CD4-positive, alpha-beta memory T cell (primary cell): ENCODE measurements at regions of chr20 and their contacts with region 1.

Region 1: DNA sequence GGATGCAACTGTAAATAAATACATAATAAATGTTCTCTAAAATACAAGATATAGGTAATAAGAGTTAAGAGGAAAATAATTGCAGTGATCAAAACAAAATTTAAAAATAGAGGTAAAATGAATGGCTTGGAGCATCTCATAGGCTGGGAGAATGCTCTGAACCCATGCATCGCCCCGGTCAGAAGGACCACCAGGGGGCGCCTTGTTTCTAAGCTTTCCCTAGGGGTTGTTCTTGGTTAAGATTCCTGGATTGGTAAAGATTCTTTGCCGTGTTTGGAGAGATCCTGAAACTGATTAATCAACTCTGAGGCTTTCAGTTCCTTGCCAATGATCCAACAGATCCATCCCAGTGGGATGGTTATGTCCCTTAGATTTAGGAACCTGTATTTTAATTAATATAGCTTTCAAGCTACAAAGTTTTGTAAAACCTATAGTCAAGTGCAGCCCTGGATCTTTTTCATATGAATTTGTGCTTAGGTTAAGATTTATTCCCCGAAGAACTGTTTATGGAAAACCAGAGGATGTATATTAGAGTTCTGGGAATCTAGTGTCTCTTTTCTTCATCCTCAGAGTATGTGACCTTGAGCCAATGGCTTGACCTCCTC is 45.3 kb upstream of the PRELID3B start:
- DNase-seq: peak; percentile 75 to 81 (median 79)
- H3K4me3 ChIP-seq: no peak overlapping the region
- H3K4me3 Mint-ChIP-seq: no peak overlapping the region
- H3K27ac ChIP-seq: no peak overlapping the region
- H3K27ac Mint-ChIP-seq: peak overlapping the region in 3 of 7 donors; percentile 46 to 85 (median 65)
- H3K4me1 ChIP-seq: peaks cover 4% of the 10 kb centered on the region
- H3K4me1 Mint-ChIP-seq: peaks cover 0 to 7% (median 4%) of the 10 kb centered on the region in 4 donors
- H3K27me3 ChIP-seq: no peaks in the 10 kb centered on the region
- H3K27me3 Mint-ChIP-seq: peaks cover 0 to 1% of the 10 kb centered on the region in 2 donors

Region 2: DNA sequence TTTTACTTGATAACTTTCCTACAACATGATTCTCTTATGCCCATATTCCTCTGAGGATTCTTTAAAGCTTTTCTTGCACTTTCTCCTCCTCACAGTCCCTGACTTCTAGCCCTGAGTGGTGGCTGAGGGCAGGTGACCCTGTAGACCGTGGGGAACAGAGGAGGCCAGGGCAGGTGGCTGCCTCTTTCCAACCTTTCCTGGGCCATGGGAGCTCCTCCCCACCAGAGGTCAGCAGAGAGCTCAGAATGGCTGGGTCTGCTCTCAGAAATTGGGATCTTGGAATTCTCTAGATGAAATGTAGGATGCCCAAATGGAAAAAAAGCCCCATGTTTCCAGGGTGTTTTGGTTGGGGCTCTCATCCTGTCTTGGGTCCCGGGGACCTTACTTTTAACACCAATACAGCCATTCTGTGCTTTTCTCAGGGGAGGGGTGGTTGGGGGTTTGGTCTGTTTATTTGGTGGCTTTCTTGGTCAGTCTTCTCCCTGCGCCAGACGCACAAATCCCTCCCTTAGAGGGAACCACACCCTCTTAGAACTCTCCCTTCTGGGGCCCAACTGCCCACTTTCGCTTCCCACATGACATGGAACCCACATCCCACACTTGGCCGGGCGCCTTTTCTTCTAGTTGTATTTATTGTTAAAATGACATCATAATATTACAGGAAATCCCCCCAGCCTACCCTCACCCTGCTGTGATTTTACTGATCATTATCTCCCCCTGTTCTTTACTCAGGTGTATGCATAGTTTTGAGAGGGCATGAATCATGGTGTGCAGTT is 217.5 kb before region 1 on chr20:
- CTCF ChIA-PET with region 1: interaction called, 7 read pairs
- POLR2A ChIA-PET with region 1: no interaction called
- intact Hi-C with region 1: loop called (anchors 2 kb)
- DNase-seq: peak in 4 of 5 donors; percentile 42 to 60 (median 48)
- H3K4me3 ChIP-seq: no peak overlapping the region
- H3K4me3 Mint-ChIP-seq: peak overlapping the region in 1 of 8 donors; percentile 32
- H3K27ac ChIP-seq: no peak overlapping the region
- H3K27ac Mint-ChIP-seq: peak overlapping the region in 1 of 7 donors; percentile 57
- H3K4me1 ChIP-seq: no peaks in the 10 kb centered on the region
- H3K4me1 Mint-ChIP-seq: peaks cover 0 to 3% (median 0%) of the 10 kb centered on the region in 4 donors
- H3K27me3 ChIP-seq: no peaks in the 10 kb centered on the region
- H3K27me3 Mint-ChIP-seq: no peaks in the 10 kb centered on the region

Region 3: DNA sequence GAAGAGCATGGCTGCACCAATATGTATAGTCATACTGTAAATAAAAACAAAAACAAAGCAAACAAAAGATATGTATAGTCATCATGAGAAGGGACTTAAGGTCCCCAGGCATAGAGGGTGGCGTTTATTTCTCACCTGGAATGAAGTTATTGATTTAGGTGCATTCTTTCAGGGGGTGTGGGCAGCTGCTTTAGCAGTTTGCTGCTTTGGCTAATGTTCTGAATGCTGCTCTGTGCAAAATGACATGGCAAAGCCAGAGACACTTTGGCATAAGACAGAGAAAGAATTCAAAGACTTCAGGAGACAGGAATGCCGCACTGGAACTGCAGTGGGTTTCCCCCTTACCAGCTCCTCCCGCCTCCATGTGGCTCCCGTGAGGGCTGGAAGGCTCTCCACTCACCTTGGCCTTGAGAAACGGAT is 143.3 kb before region 1 on chr20:
- CTCF ChIA-PET with region 1: no interaction called
- POLR2A ChIA-PET with region 1: no interaction called
- intact Hi-C with region 1: no loop called
- DNase-seq: no peak
- H3K4me3 ChIP-seq: no peak overlapping the region
- H3K4me3 Mint-ChIP-seq: no peak overlapping the region
- H3K27ac ChIP-seq: no peak overlapping the region
- H3K27ac Mint-ChIP-seq: no peak overlapping the region
- H3K4me1 ChIP-seq: no peaks in the 10 kb centered on the region
- H3K4me1 Mint-ChIP-seq: no peaks in the 10 kb centered on the region
- H3K27me3 ChIP-seq: no peaks in the 10 kb centered on the region
- H3K27me3 Mint-ChIP-seq: peaks cover 5% of the 10 kb centered on the region in 2 donors

Region 4: GRCh38 chr20:59149651-59150504 is 61.9 kb after region 1 on chr20:
- CTCF ChIA-PET with region 1: interaction called, 15 read pairs
- POLR2A ChIA-PET with region 1: interaction called, 4 read pairs
- intact Hi-C with region 1: loop called (anchors 1 kb)
- DNase-seq: peak; percentile 88 to 93 (median 91)
- H3K4me3 ChIP-seq: peak overlapping the region in 1 of 2 donors; percentile 2
- H3K4me3 Mint-ChIP-seq: peak overlapping the region; percentile 73 to 91 (median 80)
- H3K27ac ChIP-seq: peak overlapping the region; percentile 93
- H3K27ac Mint-ChIP-seq: peak overlapping the region; percentile 96 to 100 (median 100)
- H3K4me1 ChIP-seq: peaks cover 92% of the 10 kb centered on the region
- H3K4me1 Mint-ChIP-seq: peaks cover 72 to 97% (median 88%) of the 10 kb centered on the region in 4 donors
- H3K27me3 ChIP-seq: no peaks in the 10 kb centered on the region
- H3K27me3 Mint-ChIP-seq: no peaks in the 10 kb centered on the region

Region 5: DNA sequence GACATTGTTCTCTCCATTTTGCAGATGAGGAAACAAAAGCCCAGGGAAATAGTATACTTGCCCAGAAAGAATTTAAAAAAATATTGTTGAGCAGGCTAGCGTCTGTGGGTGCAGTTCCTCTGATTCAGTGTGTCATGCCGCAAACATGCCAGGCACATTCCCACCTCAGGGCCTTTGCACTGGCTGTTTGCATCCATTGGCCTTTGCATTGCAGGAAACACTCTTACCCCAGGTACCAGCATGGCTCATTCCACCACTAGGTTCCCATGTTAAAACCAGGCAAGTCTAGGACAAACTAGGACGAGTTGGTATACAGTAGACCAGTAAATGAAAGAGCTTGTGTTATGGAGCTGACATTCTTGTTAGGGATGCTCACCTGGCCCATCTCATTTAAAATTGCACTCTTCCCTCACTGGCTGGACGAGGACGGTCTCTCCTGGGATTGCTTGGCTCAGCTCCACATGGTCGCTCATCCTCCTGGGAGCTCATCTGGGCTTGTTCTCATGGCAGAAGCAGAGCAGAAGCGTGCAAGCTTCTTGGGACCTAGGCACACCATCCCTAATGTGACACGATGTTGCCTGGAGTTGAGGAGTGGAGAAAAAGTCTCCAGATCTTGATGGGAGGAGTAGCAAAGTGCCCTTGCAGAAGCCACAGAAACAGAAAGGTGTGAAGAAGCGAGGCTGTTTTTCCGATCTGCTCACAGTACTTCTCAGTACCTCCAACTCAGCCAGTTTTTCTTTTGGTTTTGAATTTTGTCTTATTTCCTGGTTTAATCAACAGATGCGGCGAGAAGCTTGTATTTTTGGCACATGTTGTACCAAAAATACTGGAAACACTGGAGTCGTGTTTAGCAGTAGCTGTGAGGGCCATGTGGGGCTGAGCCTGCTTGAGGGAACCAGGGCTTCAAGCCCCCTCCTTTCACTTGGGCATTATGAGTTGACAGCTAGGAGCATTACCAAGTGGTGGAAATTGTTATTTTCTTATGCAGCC is 89.6 kb after region 1 on chr20:
- CTCF ChIA-PET with region 1: interaction called, 13 read pairs
- POLR2A ChIA-PET with region 1: interaction called, 4 read pairs
- intact Hi-C with region 1: no loop called
- DNase-seq: peak; percentile 54 to 75 (median 59)
- H3K4me3 ChIP-seq: no peak overlapping the region
- H3K4me3 Mint-ChIP-seq: peak overlapping the region; percentile 67 to 88 (median 78)
- H3K27ac ChIP-seq: peak overlapping the region; percentile 68
- H3K27ac Mint-ChIP-seq: peak overlapping the region; percentile 88 to 98 (median 96)
- H3K4me1 ChIP-seq: peaks cover 84% of the 10 kb centered on the region
- H3K4me1 Mint-ChIP-seq: peaks cover 70 to 98% (median 86%) of the 10 kb centered on the region in 4 donors
- H3K27me3 ChIP-seq: no peaks in the 10 kb centered on the region
- H3K27me3 Mint-ChIP-seq: no peaks in the 10 kb centered on the region

Region 6: DNA sequence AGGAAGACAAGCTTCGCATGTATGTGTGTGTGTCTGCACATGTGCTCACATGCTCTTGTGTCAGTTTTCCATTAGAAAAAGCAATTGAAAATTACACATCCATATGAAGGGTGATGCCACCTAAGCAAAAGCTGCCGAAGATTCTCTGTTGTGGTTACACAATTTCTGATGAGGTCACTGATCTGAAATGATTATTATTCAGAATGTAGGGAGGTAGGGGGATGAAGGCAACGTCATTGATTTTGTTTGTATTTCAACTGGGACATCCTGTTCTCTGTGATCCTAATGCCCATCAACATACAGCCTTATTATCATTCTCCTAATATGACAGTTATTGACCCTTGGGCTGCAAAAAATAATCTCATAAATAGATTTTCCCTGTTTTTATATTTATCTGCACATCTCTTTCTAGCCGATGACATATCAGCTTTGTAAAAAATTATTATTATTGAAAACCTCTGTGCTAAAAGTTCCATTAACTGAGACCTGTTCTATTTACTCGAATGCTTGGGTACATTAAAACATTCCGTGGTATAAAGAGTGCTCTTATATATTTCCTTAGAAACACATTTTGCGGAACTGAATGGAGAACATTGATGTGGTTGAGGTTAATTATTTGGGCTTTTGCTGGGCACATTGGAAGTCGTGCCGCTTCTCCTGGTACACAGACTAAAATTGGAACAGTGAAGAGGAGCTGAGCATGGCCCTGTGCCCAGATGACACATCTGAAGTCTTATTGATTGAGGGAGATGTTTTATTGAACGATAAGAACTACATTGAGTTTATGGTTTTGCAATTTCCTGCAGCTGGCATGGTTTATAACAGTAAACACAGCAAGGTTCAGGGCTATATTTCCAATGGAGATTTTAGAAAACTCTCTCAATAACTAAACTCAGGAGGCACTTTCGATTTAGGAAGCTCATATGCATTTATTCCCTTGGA is 126.9 kb after region 1 on chr20:
- CTCF ChIA-PET with region 1: interaction called, 17 read pairs
- POLR2A ChIA-PET with region 1: no interaction called
- intact Hi-C with region 1: no loop called
- DNase-seq: no peak
- H3K4me3 ChIP-seq: no peak overlapping the region
- H3K4me3 Mint-ChIP-seq: no peak overlapping the region
- H3K27ac ChIP-seq: no peak overlapping the region
- H3K27ac Mint-ChIP-seq: peak overlapping the region in 5 of 7 donors; percentile 8 to 61 (median 46)
- H3K4me1 ChIP-seq: no peaks in the 10 kb centered on the region
- H3K4me1 Mint-ChIP-seq: peaks cover 2 to 10% (median 5%) of the 10 kb centered on the region in 4 donors
- H3K27me3 ChIP-seq: no peaks in the 10 kb centered on the region
- H3K27me3 Mint-ChIP-seq: no peaks in the 10 kb centered on the region

Region 7: DNA sequence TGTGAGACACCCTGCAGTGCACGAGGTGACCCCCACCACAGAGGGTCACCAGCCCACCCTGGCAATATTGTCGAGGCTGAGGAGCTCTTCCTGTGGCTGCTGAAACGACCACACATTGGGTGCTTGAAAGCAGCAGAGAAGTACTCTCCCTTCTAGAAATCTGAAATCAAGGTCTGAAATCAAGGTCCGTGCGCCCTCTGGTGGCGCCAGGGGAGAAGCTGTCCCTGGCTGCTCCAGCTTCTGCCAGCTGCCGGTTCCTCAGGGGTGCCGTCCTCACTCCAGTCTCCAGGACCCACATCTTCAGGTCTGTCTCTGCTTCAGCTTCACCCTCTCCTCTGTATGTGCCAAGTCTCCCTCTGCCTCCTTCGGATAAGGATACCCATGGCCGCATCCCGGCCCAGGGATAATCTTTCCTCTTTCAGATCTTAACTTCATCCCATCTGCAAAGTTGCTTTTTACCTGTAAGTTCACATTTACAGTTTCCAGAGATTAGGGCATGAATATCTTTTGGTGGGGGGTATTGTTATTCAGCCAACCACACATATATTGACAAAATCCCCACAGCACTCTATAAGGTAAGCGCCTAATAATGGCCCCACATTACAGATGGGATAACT is 408.1 kb after region 1 on chr20:
- CTCF ChIA-PET with region 1: no interaction called
- POLR2A ChIA-PET with region 1: no interaction called
- intact Hi-C with region 1: loop called (anchors 10 kb)
- DNase-seq: peak; percentile 50 to 59 (median 53)
- H3K4me3 ChIP-seq: no peak overlapping the region
- H3K4me3 Mint-ChIP-seq: no peak overlapping the region
- H3K27ac ChIP-seq: no peak overlapping the region
- H3K27ac Mint-ChIP-seq: no peak overlapping the region
- H3K4me1 ChIP-seq: no peaks in the 10 kb centered on the region
- H3K4me1 Mint-ChIP-seq: peaks cover 0 to 2% (median 0%) of the 10 kb centered on the region in 4 donors
- H3K27me3 ChIP-seq: peaks cover 6% of the 10 kb centered on the region
- H3K27me3 Mint-ChIP-seq: peaks cover 14 to 17% of the 10 kb centered on the region in 2 donors